ENCODE measurements at regions of chr2 and their contacts with region 1.

Region 1: GRCh38 chr2:28594289-28595108 is 98.6 kb downstream of the PLB1 start:
- DNase-seq: peak; percentile 85
- ATAC-seq: peak; percentile 90
- H3K4me3 ChIP-seq: peak overlapping the region in 1 of 2 experiments; percentile 23; a peak in 2 of 4 replicates
- H3K27ac ChIP-seq: peak overlapping the region; percentile 75
- H3K4me1 ChIP-seq: peaks cover 14% of the 10 kb centered on the region
- H3K27me3 ChIP-seq: no peaks in the 10 kb centered on the region
- CTCF ChIP-seq: peak; percentile 92

Region 2: GRCh38 chr2:27720004-27720551 is 874.4 kb before region 1 on chr2:
- CTCF ChIA-PET with region 1: no interaction called
- POLR2A ChIA-PET with region 1: no interaction called
- in situ Hi-C with region 1: no loop called
- intact Hi-C with region 1: no loop called
- DNase-seq: peak; percentile 97
- ATAC-seq: peak; percentile 71
- H3K4me3 ChIP-seq: no peak overlapping the region
- H3K27ac ChIP-seq: no peak overlapping the region
- H3K4me1 ChIP-seq: peaks cover 19% of the 10 kb centered on the region
- H3K27me3 ChIP-seq: no peaks in the 10 kb centered on the region
- CTCF ChIP-seq: no peak

Region 3: GRCh38 chr2:28583899-28584553 is 10.5 kb before region 1 on chr2:
- CTCF ChIA-PET with region 1: interaction called, 22 read pairs
- POLR2A ChIA-PET with region 1: no interaction called
- in situ Hi-C with region 1: no loop called
- intact Hi-C with region 1: no loop called
- DNase-seq: peak; percentile 99
- ATAC-seq: peak; percentile 97
- H3K4me3 ChIP-seq: peak overlapping the region in 1 of 2 experiments; percentile 42; a peak in 2 of 4 replicates
- H3K27ac ChIP-seq: peak overlapping the region; percentile 80
- H3K4me1 ChIP-seq: peaks cover 20% of the 10 kb centered on the region
- H3K27me3 ChIP-seq: no peaks in the 10 kb centered on the region
- CTCF ChIP-seq: no peak

Region 4: GRCh38 chr2:28752631-28753376 is 158.3 kb after region 1 on chr2:
- CTCF ChIA-PET with region 1: interaction called, 3 read pairs
- POLR2A ChIA-PET with region 1: interaction called, 4 read pairs
- in situ Hi-C with region 1: no loop called
- intact Hi-C with region 1: loop called (anchors 1 kb)
- DNase-seq: no peak
- ATAC-seq: no peak
- H3K4me3 ChIP-seq: peak overlapping the region; percentile 90 to 98
- H3K27ac ChIP-seq: peak overlapping the region; percentile 92
- H3K4me1 ChIP-seq: peaks cover 38% of the 10 kb centered on the region
- H3K27me3 ChIP-seq: no peaks in the 10 kb centered on the region
- CTCF ChIP-seq: no peak

Region 5: DNA sequence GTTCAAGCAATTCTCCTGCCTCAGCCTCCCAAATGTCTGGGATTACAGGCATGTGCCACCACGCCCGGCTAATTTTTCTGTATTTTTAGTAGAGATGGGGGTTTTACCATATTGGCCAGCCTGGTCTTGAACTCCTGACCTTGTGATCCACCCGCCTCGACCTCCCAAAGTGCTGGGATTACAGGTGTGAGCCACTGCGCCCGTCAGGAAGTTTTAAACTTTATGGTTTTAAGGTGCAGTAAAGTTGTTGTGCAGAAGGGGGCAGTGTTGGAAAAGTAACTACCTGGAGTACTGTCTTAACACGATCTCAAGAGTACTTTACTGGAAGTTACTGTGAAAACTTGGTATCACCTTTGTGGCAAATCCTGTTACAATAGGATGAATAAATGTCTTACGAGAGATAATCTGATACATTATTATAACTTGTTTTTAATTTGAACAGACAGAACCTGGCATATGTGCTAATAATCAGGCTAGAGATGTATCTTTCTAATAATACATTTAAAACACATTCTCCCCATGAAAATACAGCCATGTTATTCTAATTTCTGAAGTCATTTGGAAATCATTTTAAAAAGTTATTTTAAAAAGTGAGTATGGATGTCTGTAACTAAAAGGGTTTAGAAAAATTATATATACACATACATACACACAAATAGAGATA is 226.9 kb after region 1 on chr2:
- CTCF ChIA-PET with region 1: interaction called, 10 read pairs
- POLR2A ChIA-PET with region 1: no interaction called
- in situ Hi-C with region 1: no loop called
- intact Hi-C with region 1: no loop called
- DNase-seq: peak; percentile 75
- ATAC-seq: peak; percentile 89
- H3K4me3 ChIP-seq: no peak overlapping the region
- H3K27ac ChIP-seq: no peak overlapping the region
- H3K4me1 ChIP-seq: no peaks in the 10 kb centered on the region
- H3K27me3 ChIP-seq: no peaks in the 10 kb centered on the region
- CTCF ChIP-seq: peak; percentile 85

Region 6: GRCh38 chr2:29000481-29000880 is 406.0 kb after region 1 on chr2:
- CTCF ChIA-PET with region 1: no interaction called
- POLR2A ChIA-PET with region 1: no interaction called
- in situ Hi-C with region 1: no loop called
- intact Hi-C with region 1: no loop called
- DNase-seq: no peak
- ATAC-seq: no peak
- H3K4me3 ChIP-seq: no peak overlapping the region
- H3K27ac ChIP-seq: no peak overlapping the region
- H3K4me1 ChIP-seq: no peaks in the 10 kb centered on the region
- H3K27me3 ChIP-seq: no peaks in the 10 kb centered on the region
- CTCF ChIP-seq: no peak